Dendritic cell treated with granulocyte-macrophage colony-stimulating factor and Interleukin-4, amounts not matched to agents 40 ng/mL and 50 ng/mL, for 4 days (primary cell): ENCODE measurements at regions of chr20 and their contacts with region 1.

Region 1: DNA sequence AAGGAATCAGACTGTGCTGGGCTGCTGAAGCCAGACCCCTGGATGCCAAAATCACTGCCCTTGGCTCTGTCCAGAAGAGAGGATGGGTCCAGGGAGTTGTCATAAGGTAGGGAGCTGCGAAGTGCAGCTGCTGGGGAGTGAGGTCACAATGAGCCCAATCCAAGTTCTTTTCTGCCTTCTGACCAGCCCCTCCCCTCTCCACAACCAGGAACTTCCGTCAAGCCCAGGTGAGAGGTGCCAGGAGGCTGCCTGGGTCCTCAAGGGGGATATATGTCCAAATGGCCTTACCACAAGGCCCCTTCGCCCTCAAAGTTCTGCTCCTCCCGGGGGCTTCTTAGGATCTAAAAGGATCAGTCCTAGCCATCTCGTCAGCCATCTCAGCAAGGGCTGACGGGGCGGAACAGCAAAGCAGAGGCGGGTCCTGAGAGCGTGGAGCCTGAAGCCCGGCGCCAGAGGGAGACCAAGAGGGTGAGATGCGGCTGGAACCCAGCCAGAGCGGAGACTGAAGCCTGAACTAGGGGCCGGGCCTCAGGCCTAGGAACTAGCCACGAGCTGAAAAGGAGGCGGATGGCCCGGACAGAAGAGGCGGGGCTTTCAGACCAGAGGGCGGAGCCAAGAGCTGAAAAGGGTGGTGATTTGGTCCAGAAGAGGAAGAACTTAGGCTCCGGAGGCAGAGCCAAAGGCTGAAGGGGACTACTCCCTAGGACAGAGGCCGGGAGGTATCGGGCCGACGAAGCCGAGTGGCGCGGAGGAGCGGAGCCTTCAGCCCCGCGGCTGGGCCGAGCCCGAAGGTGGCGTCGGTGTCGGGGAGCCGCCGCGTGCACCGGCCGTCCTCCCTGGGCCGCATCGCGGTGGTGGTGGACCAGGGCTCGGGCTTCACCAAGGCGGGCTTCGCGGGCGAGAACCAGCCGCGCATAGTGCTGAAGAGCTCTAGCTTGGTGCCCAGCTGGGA is at the start of gene ACTL10:
- H3K4me3 Mint-ChIP-seq: peak within 1 kb of the TSS; percentile 75
- H3K27ac Mint-ChIP-seq: peak within 1 kb of the TSS; percentile 76
- H3K4me1 Mint-ChIP-seq: peaks cover 64% of the 10 kb centered on the region
- H3K27me3 Mint-ChIP-seq: no peaks in the 10 kb centered on the region

Region 2: DNA sequence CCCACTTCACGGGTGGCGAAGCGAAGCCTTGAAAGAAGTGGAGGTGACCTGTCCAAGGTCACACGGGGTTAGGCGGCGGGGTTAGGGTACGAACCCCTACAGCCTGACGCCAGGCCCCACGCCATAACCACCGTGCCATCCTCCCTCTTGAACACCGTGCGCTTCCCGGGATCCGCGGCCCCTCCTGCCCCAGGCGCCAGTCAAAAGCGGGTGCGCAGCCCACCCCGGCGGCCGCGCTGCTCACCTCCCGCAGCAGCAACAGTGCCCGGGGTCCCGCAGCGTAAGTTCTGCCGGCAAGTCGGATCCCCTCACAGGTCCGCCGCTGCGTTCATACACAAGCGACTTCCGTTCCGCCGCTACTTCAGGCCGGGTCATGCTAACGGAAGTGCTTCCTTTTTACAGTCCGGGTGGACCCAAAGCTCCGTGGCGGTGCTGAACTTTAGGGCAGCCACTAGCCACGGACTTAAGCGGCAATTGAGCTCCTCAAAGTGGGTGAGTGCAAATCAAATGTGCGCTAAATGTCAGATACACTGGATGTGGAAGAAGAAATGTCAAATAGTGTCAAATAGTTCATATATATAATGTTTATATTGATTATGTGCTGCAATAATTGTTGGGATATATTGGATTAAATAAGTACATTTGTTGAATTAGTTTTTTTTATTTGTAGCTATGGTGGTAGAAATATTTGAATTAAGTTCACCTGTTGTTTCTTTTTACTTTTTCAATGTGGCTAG is 265.2 kb before region 1 on chr20 and contains the start of gene CDK5RAP1:
- intact Hi-C with region 1: loop called (anchors 5 kb)
- H3K4me3 Mint-ChIP-seq: peak within 1 kb of the TSS; percentile 98
- H3K27ac Mint-ChIP-seq: peak within 1 kb of the TSS; percentile 94
- H3K4me1 Mint-ChIP-seq: peaks cover 47% of the 10 kb centered on the region
- H3K27me3 Mint-ChIP-seq: no peaks in the 10 kb centered on the region

Region 3: GRCh38 chr20:33450867-33451266 is 215.7 kb before region 1 on chr20:
- intact Hi-C with region 1: loop called (anchors 2 kb)
- H3K4me3 Mint-ChIP-seq: no peak overlapping the region
- H3K27ac Mint-ChIP-seq: no peak overlapping the region
- H3K4me1 Mint-ChIP-seq: no peaks in the 10 kb centered on the region
- H3K27me3 Mint-ChIP-seq: peaks cover 1% of the 10 kb centered on the region

Region 4: GRCh38 chr20:33554914-33555420 is 111.6 kb before region 1 on chr20:
- intact Hi-C with region 1: loop called (anchors 10 kb)
- H3K4me3 Mint-ChIP-seq: no peak overlapping the region
- H3K27ac Mint-ChIP-seq: peak overlapping the region; percentile 83
- H3K4me1 Mint-ChIP-seq: peaks cover 30% of the 10 kb centered on the region
- H3K27me3 Mint-ChIP-seq: no peaks in the 10 kb centered on the region

Region 5: GRCh38 chr20:33731693-33732165 is 65.2 kb after region 1 on chr20 and contains the start of gene ZNF341:
- intact Hi-C with region 1: loop called (anchors 2 kb)
- H3K4me3 Mint-ChIP-seq: peak within 1 kb of the TSS; percentile 89
- H3K27ac Mint-ChIP-seq: peak within 1 kb of the TSS; percentile 90
- H3K4me1 Mint-ChIP-seq: peaks cover 47% of the 10 kb centered on the region
- H3K27me3 Mint-ChIP-seq: no peaks in the 10 kb centered on the region

Region 6: GRCh38 chr20:33992923-33993575 is 326.5 kb after region 1 on chr20:
- intact Hi-C with region 1: loop called (anchors 10 kb)
- H3K4me3 Mint-ChIP-seq: peak overlapping the region; percentile 94
- H3K27ac Mint-ChIP-seq: peak overlapping the region; percentile 95
- H3K4me1 Mint-ChIP-seq: peaks cover 52% of the 10 kb centered on the region
- H3K27me3 Mint-ChIP-seq: no peaks in the 10 kb centered on the region